Naive thymus-derived CD8-positive, alpha-beta T cell (primary cell): ENCODE measurements at regions of chr11 and their contacts with region 1.

Region 1: GRCh38 chr11:3797329-3798095 is at the start of gene NUP98:
- DNase-seq: peak; percentile 97 to 100 (median 100)
- ATAC-seq: peak; percentile 93
- H3K4me3 Mint-ChIP-seq: peak within 1 kb of the TSS; percentile 86 to 97 (median 96)
- H3K27ac Mint-ChIP-seq: peak within 1 kb of the TSS; percentile 97 to 100 (median 99)
- H3K4me1 Mint-ChIP-seq: peaks cover 17 to 60% (median 52%) of the 10 kb centered on the region in 4 donors
- H3K27me3 Mint-ChIP-seq: peaks cover 0 to 2% (median 0%) of the 10 kb centered on the region in 5 donors
- polyA plus RNA-seq, gene NUP98: 31.8 to 50.9 (median 44.9) TPM

Region 2: GRCh38 chr11:3642071-3642951 is 155.2 kb before region 1 on chr11:
- POLR2A ChIA-PET with region 1: no interaction called
- DNase-seq: peak; percentile 53 to 81 (median 68)
- ATAC-seq: peak; percentile 95 to 98
- H3K4me3 Mint-ChIP-seq: peak overlapping the region; percentile 76 to 87 (median 82)
- H3K27ac Mint-ChIP-seq: peak overlapping the region in 4 of 10 donors; percentile 27 to 76 (median 54)
- H3K4me1 Mint-ChIP-seq: peaks cover 6 to 20% (median 13%) of the 10 kb centered on the region in 4 donors
- H3K27me3 Mint-ChIP-seq: peaks cover 19 to 44% (median 32%) of the 10 kb centered on the region in 5 donors

Region 3: DNA sequence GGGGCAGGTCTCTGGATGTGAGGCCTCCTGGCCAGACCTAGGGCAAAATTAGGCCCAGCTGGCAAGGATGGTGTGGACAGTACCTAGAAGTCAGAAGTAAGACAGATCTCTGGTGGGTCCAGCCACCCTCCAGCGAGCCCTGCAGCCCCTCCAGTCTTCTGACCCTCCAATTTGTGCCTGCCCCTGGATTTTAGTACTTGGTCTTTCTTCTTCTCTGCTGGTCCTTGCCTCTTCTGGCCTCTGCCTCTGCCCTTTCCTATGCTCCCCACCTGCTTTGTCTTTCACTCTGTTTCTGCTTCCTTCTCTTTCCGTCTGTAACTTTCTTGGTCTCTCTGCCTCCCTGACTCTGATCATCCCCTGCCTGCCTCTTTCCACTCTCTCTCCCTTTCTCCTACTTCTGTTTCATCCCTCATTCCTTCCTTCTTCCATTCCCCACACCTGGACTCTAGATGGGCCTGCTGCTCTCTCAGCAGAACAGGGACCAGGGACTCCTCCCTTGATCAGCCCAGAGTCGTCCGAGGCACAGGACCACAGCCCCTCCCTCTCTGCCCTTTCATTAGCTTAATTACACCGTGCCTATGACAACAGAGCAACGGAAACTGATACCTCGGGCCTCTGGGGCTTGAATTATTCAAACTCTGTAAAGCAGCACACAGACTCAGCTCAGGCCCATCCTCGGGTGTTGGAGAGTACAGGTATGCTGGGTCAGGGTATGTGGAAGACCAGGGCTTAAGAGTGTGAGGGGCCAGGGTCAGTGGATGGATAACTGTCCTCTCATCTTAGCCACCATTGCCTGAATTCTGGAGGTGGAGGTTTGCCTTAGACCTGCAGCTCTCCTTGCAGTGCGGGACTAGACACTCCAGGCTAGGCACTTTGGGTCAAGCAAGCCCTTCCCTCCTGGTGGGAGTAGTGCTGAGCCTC is 125.9 kb before region 1 on chr11 and contains the start of gene CHRNA10:
- POLR2A ChIA-PET with region 1: no interaction called
- DNase-seq: no peak
- ATAC-seq: no peak
- H3K4me3 Mint-ChIP-seq: no peak within 1 kb of the TSS
- H3K27ac Mint-ChIP-seq: peak within 1 kb of the TSS in 9 of 10 donors; percentile 37 to 93 (median 66)
- H3K4me1 Mint-ChIP-seq: peaks cover 0 to 5% (median 0%) of the 10 kb centered on the region in 4 donors
- H3K27me3 Mint-ChIP-seq: no peaks in the 10 kb centered on the region
- polyA plus RNA-seq, gene CHRNA10: 0.15 to 0.32 TPM in 2 of 3 donors, not detected in the other

Region 4: DNA sequence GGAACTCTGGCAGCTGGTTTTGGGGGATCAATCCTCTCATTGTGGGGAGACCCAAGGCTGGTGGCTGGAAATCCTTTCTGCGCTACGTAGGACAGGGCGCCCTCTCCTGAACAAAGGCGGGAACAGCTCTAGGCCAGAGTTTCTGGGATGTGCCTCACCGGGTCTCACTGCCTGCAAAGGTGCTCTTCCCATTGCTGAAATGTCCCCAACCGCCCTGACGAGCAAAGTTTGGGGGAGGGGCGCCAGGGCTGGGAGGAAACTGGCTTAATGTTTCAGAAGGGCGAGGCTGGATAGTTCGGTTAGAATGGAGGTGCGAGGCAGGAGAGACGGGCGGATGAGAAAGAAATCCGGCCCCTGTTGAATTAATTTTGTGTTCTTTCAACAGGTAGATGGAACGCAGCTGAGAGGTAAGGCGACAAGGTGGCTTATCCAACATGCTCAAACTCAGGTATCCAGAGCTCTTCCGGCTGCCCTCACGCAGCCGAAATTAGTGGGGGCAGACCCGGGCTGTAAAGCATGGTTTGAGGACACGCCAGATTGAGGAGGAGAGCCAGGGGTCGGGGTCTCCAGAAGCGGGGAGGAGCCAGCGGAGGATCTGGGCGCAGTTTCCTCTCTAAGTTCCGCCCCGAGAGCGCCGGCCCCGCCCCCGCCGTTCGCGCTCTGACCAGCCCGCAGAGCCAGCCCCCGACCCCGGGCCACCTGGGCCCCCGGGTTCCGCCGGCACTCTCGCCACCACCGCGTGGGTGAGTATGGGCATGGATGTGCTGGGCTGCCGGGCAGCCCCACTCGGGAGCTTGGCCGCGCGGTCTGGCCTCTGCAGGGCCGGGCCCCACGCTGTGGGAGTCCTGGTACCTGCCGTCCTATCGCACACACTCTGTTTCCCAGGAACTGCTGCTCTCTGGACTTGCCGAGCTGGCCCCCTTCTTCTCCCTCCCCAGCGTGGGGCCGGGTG is 10.7 kb after region 1 on chr11 and contains the start of gene PGAP2:
- POLR2A ChIA-PET with region 1: interaction called, 29 read pairs
- DNase-seq: peak; percentile 32 to 74 (median 54)
- ATAC-seq: peak; percentile 70 to 81
- H3K4me3 Mint-ChIP-seq: peak within 1 kb of the TSS; percentile 94 to 100 (median 97)
- H3K27ac Mint-ChIP-seq: peak within 1 kb of the TSS; percentile 82 to 99 (median 94)
- H3K4me1 Mint-ChIP-seq: peaks cover 12 to 30% (median 17%) of the 10 kb centered on the region in 4 donors
- H3K27me3 Mint-ChIP-seq: no peaks in the 10 kb centered on the region
- polyA plus RNA-seq, gene PGAP2: 13.6 to 24.2 (median 21.9) TPM

Region 5: DNA sequence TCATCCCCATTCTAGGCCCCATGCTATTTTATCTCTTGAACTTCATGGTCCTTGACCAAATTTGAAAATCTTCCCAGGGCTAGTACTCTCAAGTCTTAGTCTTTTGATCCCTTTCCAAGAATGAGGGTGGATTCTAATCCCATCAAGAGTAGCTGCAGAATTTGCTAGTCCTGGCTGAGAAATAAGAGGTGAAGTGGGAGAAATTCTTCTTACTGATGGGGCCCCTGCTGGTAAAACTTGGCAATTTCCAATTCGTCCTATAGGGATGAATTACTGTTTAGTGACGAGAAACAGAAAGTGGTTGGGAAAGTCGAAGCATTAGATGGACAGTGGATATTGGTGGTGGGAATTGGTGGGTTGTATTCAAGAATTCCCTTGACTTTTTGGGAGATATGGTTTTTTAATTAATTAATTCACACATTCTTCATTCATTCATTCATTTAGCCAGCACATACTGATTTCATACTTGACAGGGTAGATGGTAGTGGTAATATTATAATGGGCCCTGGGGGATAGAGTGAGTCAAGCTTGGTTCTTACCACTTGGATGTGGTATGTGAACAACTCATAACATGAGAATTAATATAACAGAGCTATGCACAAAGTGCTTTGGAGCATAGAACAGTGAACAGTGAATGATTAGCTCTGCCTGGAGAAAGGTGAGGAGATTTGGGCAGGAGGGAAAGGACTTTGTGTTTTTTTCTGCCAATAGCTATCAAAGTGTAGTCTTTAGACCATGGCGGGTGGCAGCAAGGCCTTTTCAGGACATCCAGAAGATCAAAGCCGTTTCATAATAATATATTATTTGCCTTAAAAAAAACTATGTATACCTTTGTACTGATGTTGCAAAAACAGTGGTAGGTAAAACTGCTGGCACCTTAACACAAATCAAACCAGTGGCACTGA is 161.8 kb after region 1 on chr11:
- POLR2A ChIA-PET with region 1: no interaction called
- DNase-seq: no peak
- ATAC-seq: no peak
- H3K4me3 Mint-ChIP-seq: peak overlapping the region in 3 of 10 donors; percentile 20 to 50 (median 27)
- H3K27ac Mint-ChIP-seq: peak overlapping the region in 8 of 10 donors; percentile 11 to 81 (median 66)
- H3K4me1 Mint-ChIP-seq: peaks cover 42 to 88% (median 84%) of the 10 kb centered on the region in 4 donors
- H3K27me3 Mint-ChIP-seq: no peaks in the 10 kb centered on the region